Caco-2 (cell line): ENCODE measurements at regions of chr10 and their contacts with region 1.

Region 1: GRCh38 chr10:22436884-22437619 is 91.8 kb downstream of the SPAG6 start:
- DNase-seq: peak; percentile 84 to 85
- H3K4me3 ChIP-seq: peak overlapping the region; percentile 54
- H3K4me3 Mint-ChIP-seq: peak overlapping the region; percentile 92
- H3K27ac Mint-ChIP-seq: peak overlapping the region; percentile 90
- H3K4me1 ChIP-seq: peaks cover 41% of the 10 kb centered on the region
- H3K4me1 Mint-ChIP-seq: peaks cover 62% of the 10 kb centered on the region
- H3K27me3 ChIP-seq: no peaks in the 10 kb centered on the region
- H3K27me3 Mint-ChIP-seq: no peaks in the 10 kb centered on the region
- CTCF ChIP-seq: peak in 1 of 2 experiments; percentile 41

Region 2: DNA sequence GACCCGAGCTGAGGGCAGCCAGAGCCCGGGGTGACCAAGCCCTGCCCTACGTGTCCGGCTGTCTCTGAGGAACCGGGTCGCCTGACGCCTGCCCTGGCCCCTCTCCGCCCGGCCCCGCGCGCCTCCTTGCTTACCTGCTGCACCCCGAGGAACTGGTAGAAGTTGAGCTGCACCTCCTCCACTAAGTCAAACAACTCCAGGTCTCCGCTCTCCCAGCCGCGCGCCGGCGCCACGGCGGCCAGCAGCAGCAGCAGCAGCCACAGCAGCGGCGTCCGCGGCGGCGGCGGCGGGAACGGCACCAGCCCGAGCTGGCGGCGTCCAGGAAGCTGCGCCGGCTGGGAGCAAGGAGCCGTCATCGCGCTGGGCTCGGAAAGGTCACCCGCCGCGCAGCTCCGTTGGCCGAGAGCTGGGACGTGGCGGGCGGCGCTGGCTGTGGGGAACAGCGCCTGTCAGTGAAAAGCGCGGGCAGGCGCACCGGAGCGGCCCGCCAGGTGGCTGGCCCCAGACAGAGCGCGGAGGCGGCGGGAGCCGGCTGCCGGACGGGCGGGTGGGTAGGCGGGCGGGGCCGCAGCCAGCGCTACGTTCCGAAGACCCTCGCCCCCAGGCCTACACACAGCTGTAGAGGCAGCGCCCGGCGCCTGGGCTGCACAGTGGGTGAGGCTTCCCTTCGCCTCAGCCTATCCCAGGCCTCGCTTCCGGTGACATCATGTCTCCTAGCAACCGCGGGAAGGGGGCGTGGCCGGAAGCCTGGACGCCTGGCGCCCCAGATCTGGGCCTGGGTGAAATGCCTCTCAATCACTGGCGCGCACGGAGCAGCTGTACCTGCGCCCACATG is 433.8 kb before region 1 on chr10 and contains the start of gene DNAJC1:
- CTCF ChIA-PET with region 1: no interaction called
- POLR2A ChIA-PET with region 1: no interaction called
- intact Hi-C with region 1: loop called (anchors 5 kb)
- DNase-seq: peak; percentile 99 to 100
- H3K4me3 ChIP-seq: peak within 1 kb of the TSS; percentile 83
- H3K4me3 Mint-ChIP-seq: peak within 1 kb of the TSS; percentile 86
- H3K27ac Mint-ChIP-seq: peak within 1 kb of the TSS; percentile 83
- H3K4me1 ChIP-seq: peaks cover 14% of the 10 kb centered on the region
- H3K4me1 Mint-ChIP-seq: peaks cover 8% of the 10 kb centered on the region
- H3K27me3 ChIP-seq: no peaks in the 10 kb centered on the region
- H3K27me3 Mint-ChIP-seq: peaks cover 14% of the 10 kb centered on the region
- CTCF ChIP-seq: no peak
- total RNA-seq, gene DNAJC1: 50.7 and 54.2 TPM in 2 replicates

Region 3: DNA sequence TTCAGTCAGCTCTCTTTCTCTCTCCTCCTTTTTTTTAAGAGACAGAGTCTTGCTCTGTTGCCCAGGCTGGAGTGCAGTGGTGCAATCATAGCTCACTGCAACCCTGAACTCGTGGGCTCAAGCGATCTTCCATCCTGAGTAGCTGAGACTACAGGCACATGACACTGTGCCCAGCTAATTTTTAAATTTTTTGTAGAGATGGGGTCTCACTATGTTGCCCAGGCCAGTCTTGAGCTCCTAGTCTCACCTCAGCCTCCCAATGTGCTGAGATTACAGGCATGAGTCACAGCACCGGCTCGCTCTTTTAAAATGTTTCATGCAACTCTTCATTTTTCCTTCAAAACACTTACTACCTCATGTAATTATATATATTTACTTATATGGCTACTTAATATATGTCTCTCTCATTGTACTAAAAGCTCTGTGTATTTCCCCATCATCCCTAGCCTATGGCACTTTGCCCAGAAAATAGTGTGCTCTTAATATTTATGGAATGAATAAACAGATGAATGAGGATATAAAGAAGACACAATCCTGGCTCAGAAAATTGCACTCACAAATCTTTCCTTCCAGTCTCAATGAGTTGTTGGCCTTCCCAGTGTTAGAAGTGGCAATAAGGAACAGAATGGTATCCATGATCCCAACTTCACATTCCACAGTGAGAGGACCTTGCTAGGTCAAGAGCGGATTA is 253.1 kb before region 1 on chr10:
- CTCF ChIA-PET with region 1: no interaction called
- POLR2A ChIA-PET with region 1: no interaction called
- intact Hi-C with region 1: no loop called
- DNase-seq: no peak
- H3K4me3 ChIP-seq: no peak overlapping the region
- H3K4me3 Mint-ChIP-seq: no peak overlapping the region
- H3K27ac Mint-ChIP-seq: no peak overlapping the region
- H3K4me1 ChIP-seq: no peaks in the 10 kb centered on the region
- H3K4me1 Mint-ChIP-seq: no peaks in the 10 kb centered on the region
- H3K27me3 ChIP-seq: 0 out of 2 replicates have a peak, but pooled peaks cover 2% of the 10 kb centered on the region
- H3K27me3 Mint-ChIP-seq: peaks cover 20% of the 10 kb centered on the region
- CTCF ChIP-seq: no peak

Region 4: DNA sequence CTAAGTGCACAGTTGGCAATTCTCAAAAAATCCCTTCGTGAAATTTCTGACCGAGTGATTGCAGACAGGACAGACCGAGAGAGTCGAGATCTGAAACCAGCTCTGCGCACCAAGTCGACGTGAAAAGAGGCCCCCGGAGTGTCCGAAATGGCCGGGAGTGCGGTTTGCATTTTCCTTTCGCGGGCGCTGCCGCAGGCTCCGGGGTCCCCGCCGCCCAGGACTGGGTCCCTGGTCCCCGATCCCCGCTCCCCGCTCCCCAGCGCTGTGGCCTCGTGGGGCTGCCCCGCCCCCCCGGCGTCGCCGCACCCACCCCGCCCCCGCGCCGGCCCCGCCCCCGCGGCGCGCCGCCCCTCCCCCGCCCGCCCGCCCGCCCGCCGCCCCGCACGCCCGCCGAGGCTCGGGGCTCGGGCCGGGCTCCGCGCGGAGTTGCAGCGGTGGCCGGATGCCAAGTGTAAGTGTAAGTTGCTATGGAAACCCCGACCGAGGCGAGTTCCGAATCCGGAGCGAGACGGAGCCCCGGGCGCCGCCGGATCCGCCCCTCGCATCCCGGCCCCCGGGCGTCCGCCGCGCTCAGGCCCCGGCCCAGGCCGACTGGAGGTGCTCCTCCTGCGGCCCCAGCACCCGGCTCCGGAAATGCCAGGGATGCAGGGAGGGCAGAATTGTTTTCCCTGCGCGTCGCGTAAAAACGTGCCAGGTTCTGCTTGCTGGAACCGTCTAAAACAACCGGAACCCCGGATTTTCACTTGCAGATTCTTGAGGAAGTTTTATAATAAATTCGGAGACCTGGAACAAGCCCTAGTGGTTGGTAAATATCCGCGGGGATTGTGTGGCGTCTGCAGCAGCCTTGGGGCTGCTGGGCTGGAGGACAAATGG is 111.5 kb before region 1 on chr10:
- CTCF ChIA-PET with region 1: no interaction called
- POLR2A ChIA-PET with region 1: no interaction called
- intact Hi-C with region 1: loop called (anchors 2 kb)
- DNase-seq: peak; percentile 79 to 89
- H3K4me3 ChIP-seq: peak overlapping the region; percentile 62
- H3K4me3 Mint-ChIP-seq: peak overlapping the region; percentile 71
- H3K27ac Mint-ChIP-seq: peak overlapping the region; percentile 63
- H3K4me1 ChIP-seq: peaks cover 36% of the 10 kb centered on the region
- H3K4me1 Mint-ChIP-seq: peaks cover 21% of the 10 kb centered on the region
- H3K27me3 ChIP-seq: no peaks in the 10 kb centered on the region
- H3K27me3 Mint-ChIP-seq: peaks cover 2% of the 10 kb centered on the region
- CTCF ChIP-seq: no peak

Region 5: DNA sequence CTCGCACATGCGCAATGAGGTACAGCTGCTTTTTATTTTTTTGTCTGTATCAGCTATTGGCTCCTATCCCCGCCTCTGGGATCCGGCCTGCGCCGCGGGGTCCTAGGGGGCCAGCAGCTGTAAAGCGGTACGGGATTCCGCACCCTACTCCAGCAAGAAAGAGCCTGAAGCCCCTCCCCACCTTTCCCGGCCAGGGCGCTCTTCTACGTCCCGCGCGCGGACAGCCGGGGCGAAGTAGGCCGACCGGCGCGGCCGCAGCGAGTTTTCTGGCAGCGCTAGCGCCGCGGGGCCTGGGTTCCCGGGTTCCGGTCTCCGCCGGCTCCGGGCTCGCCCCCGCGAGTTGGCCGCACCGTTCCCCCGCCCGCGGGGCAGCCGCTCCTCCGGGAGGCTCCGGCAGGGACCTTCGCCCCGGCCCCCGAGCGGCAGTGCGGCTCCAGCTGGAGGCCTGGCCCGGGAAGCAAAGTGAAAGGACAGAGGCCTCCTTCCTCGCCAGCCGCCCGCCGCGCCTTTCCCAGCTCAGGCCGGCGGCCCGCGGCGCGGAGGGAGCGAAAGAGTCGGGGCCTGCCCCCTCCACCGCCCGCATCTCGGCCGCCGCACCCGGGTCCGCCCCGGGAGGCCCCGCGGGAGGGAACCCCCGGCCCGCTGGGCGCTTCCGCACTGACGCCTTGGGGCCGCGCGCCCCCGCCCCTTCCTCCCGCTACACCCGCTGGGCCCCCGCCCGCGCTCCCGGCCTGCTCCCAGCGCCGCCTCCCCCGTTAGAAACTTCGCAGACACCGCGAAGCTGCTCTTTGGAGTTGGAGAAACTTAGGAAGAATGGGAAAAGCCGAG is 96.5 kb before region 1 on chr10:
- CTCF ChIA-PET with region 1: no interaction called
- POLR2A ChIA-PET with region 1: interaction called, 4 read pairs
- intact Hi-C with region 1: loop called (anchors 5 kb)
- DNase-seq: peak; percentile 70 to 82
- H3K4me3 ChIP-seq: peak overlapping the region; percentile 74
- H3K4me3 Mint-ChIP-seq: peak overlapping the region; percentile 91
- H3K27ac Mint-ChIP-seq: peak overlapping the region; percentile 93
- H3K4me1 ChIP-seq: peaks cover 5% of the 10 kb centered on the region; the same call in 1 of the 2 replicates
- H3K4me1 Mint-ChIP-seq: peaks cover 7% of the 10 kb centered on the region
- H3K27me3 ChIP-seq: no peaks in the 10 kb centered on the region; the same call in 1 of the 2 replicates
- H3K27me3 Mint-ChIP-seq: peaks cover 5% of the 10 kb centered on the region
- CTCF ChIP-seq: no peak

Region 6: DNA sequence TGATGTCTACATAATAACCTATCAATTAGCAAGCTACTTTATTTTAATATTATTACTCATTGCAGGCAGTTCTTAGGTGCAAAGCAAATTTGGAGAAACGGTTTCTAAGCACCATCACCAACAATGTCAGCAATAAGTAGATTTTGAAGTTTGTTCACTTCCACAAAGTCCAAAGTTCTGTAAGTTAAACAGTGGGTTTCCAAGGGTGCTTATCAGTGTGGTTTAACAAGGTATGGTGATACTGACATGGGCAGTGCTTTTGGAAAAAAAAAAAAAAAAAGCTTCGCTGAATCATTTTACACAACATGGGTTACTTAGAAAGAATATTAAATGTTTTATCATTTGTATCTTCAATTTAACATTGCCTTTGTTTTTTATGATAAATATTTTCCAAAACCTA is 10.0 kb after region 1 on chr10:
- CTCF ChIA-PET with region 1: no interaction called
- POLR2A ChIA-PET with region 1: interaction called, 12 read pairs
- intact Hi-C with region 1: loop called (anchors 1 kb)
- DNase-seq: peak in 1 of 2 experiments; percentile 73
- H3K4me3 ChIP-seq: no peak overlapping the region
- H3K4me3 Mint-ChIP-seq: no peak overlapping the region
- H3K27ac Mint-ChIP-seq: peak overlapping the region; percentile 51
- H3K4me1 ChIP-seq: peaks cover 47% of the 10 kb centered on the region
- H3K4me1 Mint-ChIP-seq: peaks cover 48% of the 10 kb centered on the region
- H3K27me3 ChIP-seq: no peaks in the 10 kb centered on the region
- H3K27me3 Mint-ChIP-seq: no peaks in the 10 kb centered on the region
- CTCF ChIP-seq: no peak

Region 7: GRCh38 chr10:22464966-22465629 is 28.0 kb after region 1 on chr10:
- CTCF ChIA-PET with region 1: no interaction called
- POLR2A ChIA-PET with region 1: no interaction called
- intact Hi-C with region 1: no loop called
- DNase-seq: no peak
- H3K4me3 ChIP-seq: no peak overlapping the region
- H3K4me3 Mint-ChIP-seq: no peak overlapping the region
- H3K27ac Mint-ChIP-seq: no peak overlapping the region
- H3K4me1 ChIP-seq: no peaks in the 10 kb centered on the region
- H3K4me1 Mint-ChIP-seq: no peaks in the 10 kb centered on the region
- H3K27me3 ChIP-seq: no peaks in the 10 kb centered on the region
- H3K27me3 Mint-ChIP-seq: no peaks in the 10 kb centered on the region
- CTCF ChIP-seq: no peak

Region 8: GRCh38 chr10:22606164-22606614 is 169.1 kb after region 1 on chr10:
- CTCF ChIA-PET with region 1: no interaction called
- POLR2A ChIA-PET with region 1: no interaction called
- intact Hi-C with region 1: no loop called
- DNase-seq: no peak
- H3K4me3 ChIP-seq: no peak overlapping the region
- H3K4me3 Mint-ChIP-seq: no peak overlapping the region
- H3K27ac Mint-ChIP-seq: no peak overlapping the region
- H3K4me1 ChIP-seq: no peaks in the 10 kb centered on the region
- H3K4me1 Mint-ChIP-seq: peaks cover 13% of the 10 kb centered on the region
- H3K27me3 ChIP-seq: no peaks in the 10 kb centered on the region
- H3K27me3 Mint-ChIP-seq: no peaks in the 10 kb centered on the region
- CTCF ChIP-seq: no peak